ENCODE measurements at regions of chr11 and their contacts with region 1.

Region 1: GRCh38 chr11:78645226-78646202 is 70.8 kb upstream of the NARS2 start:
- DNase-seq: peak; percentile 54 to 69 (median 58)
- H3K4me3 ChIP-seq: peak overlapping the region in 1 of 7 experiments; percentile 5
- H3K27ac ChIP-seq: no peak overlapping the region
- H3K4me1 ChIP-seq: no peaks in the 10 kb centered on the region
- H3K27me3 ChIP-seq: no peaks in the 10 kb centered on the region

Region 2: DNA sequence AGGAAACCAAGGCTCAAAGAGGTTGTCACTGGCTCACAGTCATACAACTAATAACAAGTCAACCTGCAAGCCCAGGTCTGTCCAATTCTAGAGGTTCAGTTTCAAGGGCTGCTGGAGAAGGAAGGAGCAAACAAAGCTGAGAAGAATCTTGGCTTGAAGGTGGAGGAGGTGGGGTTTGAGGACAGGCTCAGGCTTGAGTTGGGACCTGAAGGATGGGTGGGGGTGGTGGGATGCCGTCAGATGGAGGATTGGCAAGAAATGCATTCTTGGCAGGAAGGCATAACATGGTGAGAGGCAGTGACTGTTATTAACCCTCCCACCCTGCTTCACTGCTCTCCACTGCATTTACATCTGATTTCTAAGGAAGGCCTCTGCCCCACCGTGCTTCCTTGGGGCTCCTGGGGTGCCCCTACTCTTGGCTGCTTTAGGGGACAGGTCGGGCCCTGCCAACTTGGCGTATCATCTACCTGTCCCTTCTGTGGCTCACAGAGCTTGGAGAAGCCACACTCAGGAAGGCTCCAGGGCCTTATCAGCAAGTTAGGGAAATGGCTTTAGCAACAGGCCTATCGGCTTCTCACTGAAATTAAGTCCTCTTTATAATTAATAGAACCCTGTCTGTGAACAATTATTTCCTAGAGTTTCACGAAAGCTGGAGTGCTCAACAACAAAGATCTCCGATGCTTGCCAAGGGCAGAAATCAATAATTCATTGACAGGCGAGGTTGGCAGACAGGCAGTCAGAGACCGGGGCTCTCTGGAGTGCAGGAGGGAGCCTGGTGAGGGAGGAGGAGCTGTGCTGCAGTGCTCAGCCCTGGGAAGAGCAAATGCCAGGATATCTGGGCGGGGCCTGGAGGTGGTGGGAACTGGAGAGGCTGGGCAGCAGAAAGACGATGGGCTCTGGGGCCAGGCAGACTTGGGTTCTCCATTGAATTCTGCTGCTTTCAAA is 14.1 kb after region 1 on chr11:
- CTCF ChIA-PET with region 1: interaction called, 54 read pairs
- POLR2A ChIA-PET with region 1: no interaction called
- DNase-seq: no peak
- H3K4me3 ChIP-seq: no peak overlapping the region
- H3K27ac ChIP-seq: no peak overlapping the region
- H3K4me1 ChIP-seq: no peaks in the 10 kb centered on the region
- H3K27me3 ChIP-seq: peaks cover 2 to 27% (median 8%) of the 10 kb centered on the region in 5 experiments

Region 3: GRCh38 chr11:78715639-78716311 is 70.3 kb after region 1 on chr11:
- CTCF ChIA-PET with region 1: interaction called, 85 read pairs
- POLR2A ChIA-PET with region 1: no interaction called
- DNase-seq: peak; percentile 28 to 55 (median 55)
- H3K4me3 ChIP-seq: no peak overlapping the region
- H3K27ac ChIP-seq: no peak overlapping the region
- H3K4me1 ChIP-seq: no peaks in the 10 kb centered on the region
- H3K27me3 ChIP-seq: peaks cover 0 to 5% (median 4%) of the 10 kb centered on the region in 5 experiments

Region 4: GRCh38 chr11:79071190-79071589 is 425.7 kb after region 1 on chr11:
- CTCF ChIA-PET with region 1: interaction called, 24 read pairs
- POLR2A ChIA-PET with region 1: no interaction called
- DNase-seq: no peak
- H3K4me3 ChIP-seq: no peak overlapping the region
- H3K27ac ChIP-seq: no peak overlapping the region
- H3K4me1 ChIP-seq: no peaks in the 10 kb centered on the region
- H3K27me3 ChIP-seq: peaks cover 0 to 40% (median 19%) of the 10 kb centered on the region in 5 experiments

Region 5: GRCh38 chr11:79076526-79077115 is 431.1 kb after region 1 on chr11:
- CTCF ChIA-PET with region 1: interaction called, 24 read pairs
- POLR2A ChIA-PET with region 1: no interaction called
- DNase-seq: peak; percentile 34 to 56 (median 40)
- H3K4me3 ChIP-seq: no peak overlapping the region
- H3K27ac ChIP-seq: no peak overlapping the region
- H3K4me1 ChIP-seq: no peaks in the 10 kb centered on the region
- H3K27me3 ChIP-seq: peaks cover 0 to 15% (median 0%) of the 10 kb centered on the region in 5 experiments

Region 6: DNA sequence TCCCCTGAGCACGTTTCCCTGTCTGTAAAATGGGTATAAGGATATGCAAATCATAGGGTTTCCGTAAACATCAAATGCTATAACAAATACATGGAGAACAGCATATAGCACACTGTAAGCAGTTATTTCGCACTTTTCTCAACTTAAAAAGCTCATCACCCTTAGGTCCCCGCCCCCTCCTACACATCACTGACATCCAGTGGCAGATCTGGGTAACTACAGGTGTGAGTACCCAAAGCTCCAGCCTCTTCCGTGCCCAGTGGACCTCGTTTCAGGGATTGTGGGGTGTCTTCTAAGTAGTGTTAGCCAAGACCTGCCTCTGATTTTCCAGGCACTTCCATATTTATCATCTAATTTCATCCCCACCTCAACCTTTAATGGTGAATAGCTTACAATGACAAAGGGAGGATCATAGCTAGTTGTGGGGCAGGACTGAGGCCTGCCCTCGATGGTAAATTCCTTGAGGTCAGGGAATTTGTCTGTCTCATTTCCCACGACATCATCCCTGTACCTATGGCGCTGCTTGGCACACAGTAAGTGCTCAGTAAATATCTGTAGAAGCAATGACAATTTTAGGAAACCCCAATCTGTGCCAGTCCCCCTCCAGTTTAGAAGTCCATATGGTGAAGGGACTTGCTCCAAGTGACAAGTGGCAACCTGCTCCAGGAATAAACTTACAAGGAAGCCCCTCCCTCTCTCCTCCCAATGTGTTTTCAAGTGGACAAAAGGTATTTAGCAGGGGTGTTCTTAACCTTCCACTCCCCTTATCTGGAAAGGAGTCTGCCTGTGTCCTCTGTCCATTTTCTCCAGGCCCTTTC is 454.8 kb after region 1 on chr11:
- CTCF ChIA-PET with region 1: interaction called, 32 read pairs
- POLR2A ChIA-PET with region 1: no interaction called
- DNase-seq: peak; percentile 42 to 68 (median 55)
- H3K4me3 ChIP-seq: no peak overlapping the region
- H3K27ac ChIP-seq: no peak overlapping the region
- H3K4me1 ChIP-seq: no peaks in the 10 kb centered on the region
- H3K27me3 ChIP-seq: peaks cover 0 to 45% (median 0%) of the 10 kb centered on the region in 5 experiments

Region 7: DNA sequence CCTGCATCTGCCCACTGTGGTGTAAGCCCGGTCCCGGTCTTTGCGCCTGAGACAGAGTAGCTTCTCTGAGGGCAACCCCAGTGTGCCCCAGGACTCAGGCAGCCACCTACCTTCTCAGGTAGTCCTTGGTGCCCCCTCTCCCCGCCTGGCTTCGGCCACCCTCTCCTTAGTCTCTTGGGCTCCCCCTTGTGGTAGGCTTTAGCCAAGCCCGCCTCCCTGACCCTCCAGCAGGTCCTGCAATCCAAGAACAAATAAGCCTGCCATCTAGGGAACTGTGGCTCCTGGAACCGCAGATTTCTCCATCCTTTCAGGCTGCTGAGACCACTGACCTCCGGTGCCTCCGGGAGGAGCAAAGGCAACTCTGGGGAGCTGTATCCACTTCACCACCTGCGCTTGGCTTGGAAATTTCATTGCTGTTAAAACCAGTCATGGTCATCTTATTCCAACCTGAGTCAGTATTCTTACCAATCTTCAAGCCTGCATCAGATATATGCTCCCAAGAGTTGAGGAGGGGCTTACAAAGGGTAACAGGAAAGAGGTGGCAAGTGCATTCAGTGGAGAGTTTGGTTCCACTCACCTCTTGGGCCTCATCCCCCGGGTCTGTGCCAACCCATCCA is 848.1 kb after region 1 on chr11:
- CTCF ChIA-PET with region 1: interaction called, 33 read pairs
- POLR2A ChIA-PET with region 1: no interaction called
- DNase-seq: peak; percentile 26 to 54 (median 40)
- H3K4me3 ChIP-seq: no peak overlapping the region
- H3K27ac ChIP-seq: no peak overlapping the region
- H3K4me1 ChIP-seq: no peaks in the 10 kb centered on the region
- H3K27me3 ChIP-seq: peaks cover 0 to 4% (median 0%) of the 10 kb centered on the region in 5 experiments